Activated T-helper 1 cell treated with anti-CD3 and anti-CD28 coated beads, Interleukin-12 subunit alpha, Interleukin-12 subunit beta, Interleukin-2, Interleukin-4 antibody, amounts not matched to agents 30 ng/mL and 10 ng/mL and 1 ng/mL, durations not matched to agents 14 hours and 24 hours and 36 hours (primary cell): ENCODE measurements at regions of chr11 and their contacts with region 1.

Region 1: GRCh38 chr11:66001942-66002647 is at the starts of genes BANF1 and EIF1AD:
- DNase-seq: peak; percentile 93
- H3K4me3 Mint-ChIP-seq: peak within 1 kb of the TSS; percentile 99
- H3K27ac Mint-ChIP-seq: peak within 1 kb of the TSS; percentile 99
- H3K4me1 Mint-ChIP-seq: peaks cover 26% of the 10 kb centered on the region
- H3K27me3 Mint-ChIP-seq: no peaks in the 10 kb centered on the region
- total RNA-seq, gene BANF1: 282 and 284 TPM in 2 replicates
- total RNA-seq, gene EIF1AD: 69.0 and 70.7 TPM in 2 replicates

Region 2: GRCh38 chr11:65329944-65330403 is 672.1 kb before region 1 on chr11:
- intact Hi-C with region 1: loop called (anchors 5 kb)
- DNase-seq: peak; percentile 67
- H3K4me3 Mint-ChIP-seq: no peak overlapping the region
- H3K27ac Mint-ChIP-seq: no peak overlapping the region
- H3K4me1 Mint-ChIP-seq: peaks cover 16% of the 10 kb centered on the region
- H3K27me3 Mint-ChIP-seq: peaks cover 4% of the 10 kb centered on the region

Region 3: DNA sequence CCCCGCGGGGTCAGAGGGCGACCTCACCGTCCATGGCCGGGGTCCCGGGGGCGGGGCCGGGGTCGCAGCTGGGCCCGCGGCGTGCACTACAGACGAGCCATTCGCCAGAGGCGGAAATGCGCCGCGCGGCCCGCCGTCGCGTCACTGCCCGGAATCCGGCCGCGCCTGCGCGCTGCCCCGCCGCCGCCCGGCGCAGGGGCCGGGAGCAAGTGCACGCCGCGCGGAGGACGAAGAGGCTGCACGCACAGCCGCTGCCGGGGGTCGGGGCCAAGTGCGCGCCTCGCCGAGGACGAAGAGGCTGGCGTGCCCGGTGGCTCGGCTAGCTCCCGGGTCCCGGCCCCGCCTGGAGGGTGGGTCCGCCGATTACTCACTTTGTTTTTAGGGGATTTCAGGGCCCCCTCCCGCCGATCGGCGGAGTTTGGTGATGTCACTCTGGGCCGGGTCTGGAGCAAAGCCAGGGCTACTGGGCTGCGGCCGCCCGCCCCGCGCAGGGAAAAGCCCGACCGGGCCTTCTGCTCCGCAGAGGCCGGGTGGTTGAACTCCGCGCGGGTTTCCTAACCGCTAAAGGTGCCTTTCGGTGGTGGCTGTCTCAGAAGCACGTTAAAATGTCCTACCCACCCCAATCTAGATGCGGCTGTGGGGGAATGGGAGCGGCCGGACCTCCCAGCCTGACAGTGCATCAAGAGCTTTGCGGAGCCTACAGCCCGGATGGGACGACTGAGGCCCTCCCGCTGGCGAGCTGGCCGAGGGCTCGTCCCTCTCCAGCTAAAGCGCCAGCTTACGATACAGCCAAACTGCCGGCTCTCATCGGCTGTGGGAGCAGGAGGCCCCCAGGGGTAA is 339.1 kb before region 1 on chr11 and contains the start of gene RELA:
- intact Hi-C with region 1: loop called (anchors 2 kb)
- DNase-seq: peak; percentile 89
- H3K4me3 Mint-ChIP-seq: peak within 1 kb of the TSS; percentile 89
- H3K27ac Mint-ChIP-seq: peak within 1 kb of the TSS; percentile 93
- H3K4me1 Mint-ChIP-seq: peaks cover 30% of the 10 kb centered on the region
- H3K27me3 Mint-ChIP-seq: no peaks in the 10 kb centered on the region
- total RNA-seq, gene RELA: 102 and 104 TPM in 2 replicates

Region 4: GRCh38 chr11:65791691-65792213 is 210.3 kb before region 1 on chr11:
- intact Hi-C with region 1: loop called (anchors 1 kb)
- DNase-seq: peak; percentile 56
- H3K4me3 Mint-ChIP-seq: no peak overlapping the region
- H3K27ac Mint-ChIP-seq: peak overlapping the region; percentile 29
- H3K4me1 Mint-ChIP-seq: peaks cover 17% of the 10 kb centered on the region
- H3K27me3 Mint-ChIP-seq: peaks cover 24% of the 10 kb centered on the region

Region 5: DNA sequence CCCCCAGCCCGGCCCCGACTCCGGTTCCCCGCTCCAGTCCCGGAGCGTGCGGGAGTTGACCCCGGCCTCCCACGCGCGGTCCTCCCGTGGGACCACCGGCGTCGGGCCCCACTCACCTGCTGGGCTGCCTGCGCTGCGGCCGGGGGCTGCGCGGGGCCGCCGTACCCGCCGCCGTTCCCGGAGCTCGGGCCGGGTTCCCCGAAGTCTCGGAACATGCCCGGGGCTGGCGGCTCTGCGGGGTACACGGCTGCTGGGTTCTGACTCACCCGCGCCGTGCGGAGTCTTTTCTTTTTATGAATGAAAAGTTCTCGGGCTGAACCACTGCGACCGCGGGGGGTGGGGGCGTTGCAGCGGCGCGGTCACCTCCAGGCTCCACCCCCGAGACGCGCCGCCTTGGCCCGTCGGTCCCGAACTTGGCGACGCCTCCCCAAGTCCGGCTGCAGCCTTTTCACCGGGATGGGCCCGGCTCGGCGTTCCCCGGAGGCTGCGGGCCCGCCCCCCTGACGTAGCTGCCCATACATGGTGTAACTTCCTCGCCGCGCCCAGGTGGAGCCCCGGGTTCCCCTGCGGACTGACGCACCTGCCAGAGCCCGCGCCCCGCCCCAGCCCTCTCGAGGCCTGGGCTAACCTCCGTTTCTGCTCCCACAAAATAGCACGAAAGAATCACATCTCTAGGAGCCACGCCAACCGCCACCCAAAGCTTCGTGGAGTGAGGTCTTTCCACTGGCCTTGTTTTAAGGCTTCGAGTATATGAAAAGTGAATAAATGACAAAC is 101.8 kb before region 1 on chr11 and contains the start of gene FOSL1:
- intact Hi-C with region 1: loop called (anchors 1 kb)
- DNase-seq: peak; percentile 89
- H3K4me3 Mint-ChIP-seq: peak within 1 kb of the TSS; percentile 82
- H3K27ac Mint-ChIP-seq: peak within 1 kb of the TSS; percentile 67
- H3K4me1 Mint-ChIP-seq: peaks cover 23% of the 10 kb centered on the region
- H3K27me3 Mint-ChIP-seq: peaks cover 9% of the 10 kb centered on the region
- total RNA-seq, gene FOSL1: 31.7 and 33.5 TPM in 2 replicates

Region 6: DNA sequence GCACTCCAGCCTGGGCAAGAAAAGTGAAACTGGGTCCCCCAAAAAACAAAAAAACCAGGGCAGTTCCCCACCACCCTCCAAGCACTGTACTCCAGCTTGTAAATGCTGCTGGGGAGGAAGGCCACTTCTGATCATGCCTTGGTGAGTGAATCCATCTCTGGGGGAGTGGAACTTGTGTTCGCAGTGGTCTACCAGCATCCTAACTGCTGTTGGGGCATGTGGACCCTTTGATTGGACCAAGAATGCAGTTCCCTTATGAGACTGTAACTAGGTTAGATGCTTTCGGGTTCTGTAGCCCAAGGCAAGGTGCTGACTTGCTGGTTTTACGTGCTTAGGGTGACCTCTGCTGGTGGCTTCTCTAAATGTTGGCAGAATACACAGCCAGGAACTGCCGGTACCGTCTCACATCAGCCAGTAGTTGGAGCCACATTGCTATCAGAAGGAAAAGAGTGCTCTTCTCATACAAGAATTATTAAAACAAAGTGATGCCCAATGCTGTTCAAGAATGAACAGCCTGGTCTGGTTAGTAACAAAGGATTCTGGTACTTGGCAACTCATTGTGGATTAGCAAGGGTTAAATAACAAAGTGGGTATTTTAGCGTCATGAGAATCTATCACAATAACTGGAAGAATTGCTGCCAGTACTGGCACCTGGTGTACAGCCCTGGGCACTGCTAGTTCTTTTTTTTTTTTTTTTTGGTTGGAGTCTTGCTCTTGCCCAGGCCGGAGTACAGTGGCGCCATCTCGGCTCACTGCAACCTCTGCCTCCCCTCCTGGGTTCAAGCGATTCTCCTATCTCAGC is 13.1 kb before region 1 on chr11:
- intact Hi-C with region 1: loop called (anchors 1 kb)
- DNase-seq: peak; percentile 88
- H3K4me3 Mint-ChIP-seq: no peak overlapping the region
- H3K27ac Mint-ChIP-seq: peak overlapping the region; percentile 79
- H3K4me1 Mint-ChIP-seq: peaks cover 8% of the 10 kb centered on the region
- H3K27me3 Mint-ChIP-seq: no peaks in the 10 kb centered on the region

Region 7: DNA sequence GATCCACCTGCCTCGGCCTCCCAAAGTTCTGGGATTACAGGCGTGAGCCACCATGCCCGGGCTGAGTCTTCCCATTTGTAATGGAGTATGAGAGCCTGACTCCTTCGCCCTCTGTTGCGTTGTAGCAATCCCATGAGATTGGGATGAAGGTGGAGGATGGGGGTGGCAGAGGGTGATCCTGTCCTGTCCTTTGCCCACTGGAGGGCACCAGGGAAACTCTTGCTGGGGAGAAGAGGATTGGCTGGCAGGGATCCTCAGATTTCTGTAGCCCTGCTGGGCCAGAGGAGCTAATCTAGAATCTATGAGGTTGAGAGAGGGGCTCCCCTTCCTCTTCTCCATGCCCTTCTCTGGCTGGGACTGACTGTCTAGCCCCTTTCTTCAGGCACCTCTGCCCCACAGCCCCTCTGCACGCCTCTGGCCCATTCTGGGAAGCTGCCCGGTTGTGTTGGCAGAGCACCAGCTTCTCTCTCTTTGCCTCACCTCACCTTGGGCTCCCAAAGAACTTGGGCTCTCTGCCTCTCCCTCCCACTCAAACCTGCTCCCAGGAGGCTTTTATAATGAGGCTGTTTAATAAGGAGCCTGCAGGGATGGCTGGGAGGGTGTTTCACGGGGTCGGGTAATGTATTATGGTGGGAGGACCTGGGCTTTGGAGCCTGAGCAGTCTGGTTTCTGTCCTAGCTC is 33.7 kb after region 1 on chr11:
- intact Hi-C with region 1: no loop called
- DNase-seq: no peak
- H3K4me3 Mint-ChIP-seq: no peak overlapping the region
- H3K27ac Mint-ChIP-seq: no peak overlapping the region
- H3K4me1 Mint-ChIP-seq: no peaks in the 10 kb centered on the region
- H3K27me3 Mint-ChIP-seq: peaks cover 10% of the 10 kb centered on the region

Region 8: GRCh38 chr11:66051766-66052663 is 49.9 kb after region 1 on chr11 and contains the start of gene SF3B2:
- intact Hi-C with region 1: loop called (anchors 1 kb)
- DNase-seq: peak; percentile 97
- H3K4me3 Mint-ChIP-seq: peak within 1 kb of the TSS; percentile 100
- H3K27ac Mint-ChIP-seq: peak within 1 kb of the TSS; percentile 97
- H3K4me1 Mint-ChIP-seq: peaks cover 33% of the 10 kb centered on the region
- H3K27me3 Mint-ChIP-seq: peaks cover 4% of the 10 kb centered on the region
- total RNA-seq, gene SF3B2: 267 TPM in 2 replicates